ENCODE measurements at regions of chr9 and their contacts with region 1.

Region 1: GRCh38 chr9:123978981-123979380 is 32.6 kb upstream of the LHX2 start:
- DNase-seq: no peak
- H3K4me3 ChIP-seq: no peak overlapping the region
- H3K4me3 Mint-ChIP-seq: peak overlapping the region in 1 of 2 donors; percentile 40
- H3K27ac ChIP-seq: no peak overlapping the region
- H3K27ac Mint-ChIP-seq: peak overlapping the region in 1 of 7 donors; percentile 47
- H3K4me1 ChIP-seq: no peaks in the 10 kb centered on the region
- H3K4me1 Mint-ChIP-seq: no peaks in the 10 kb centered on the region
- H3K27me3 ChIP-seq: peaks cover 9 to 22% of the 10 kb centered on the region in 2 donors
- H3K27me3 Mint-ChIP-seq: peaks cover 22 to 40% (median 38%) of the 10 kb centered on the region in 3 donors
- CTCF ChIP-seq: no peak

Region 2: DNA sequence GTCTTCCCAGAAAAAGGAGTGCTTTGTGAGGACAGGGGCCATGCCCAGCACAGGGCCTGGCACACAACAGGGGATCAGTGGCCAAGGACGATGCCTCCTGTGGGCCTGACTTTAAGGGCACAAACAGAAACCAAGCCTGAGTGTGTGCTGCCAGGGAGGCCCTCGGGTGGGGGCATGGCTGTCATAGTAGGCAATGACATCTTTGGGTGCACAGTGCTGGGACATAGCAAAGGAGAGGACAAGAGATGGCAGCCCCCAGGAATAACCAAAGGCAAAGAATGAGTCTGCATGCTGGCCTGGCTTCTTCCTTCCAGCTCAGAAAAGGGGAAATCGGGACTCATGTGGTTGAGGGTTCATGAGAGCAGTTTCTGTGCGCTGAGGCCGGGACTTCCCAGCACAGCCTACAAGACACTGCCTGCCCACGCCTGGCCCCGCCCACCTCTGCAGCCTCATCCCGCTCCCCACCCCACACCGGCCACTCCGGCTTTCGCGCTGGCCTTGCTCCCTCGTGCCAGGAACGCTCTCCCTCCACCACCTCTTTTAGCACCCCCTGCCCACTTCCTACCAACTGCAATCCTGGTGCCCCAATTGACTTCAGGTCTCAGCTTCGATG is 18.8 kb after region 1 on chr9:
- intact Hi-C with region 1: loop called in 1 of 2 experiments (anchors 2 kb)
- DNase-seq: peak; percentile 72 to 97 (median 73)
- H3K4me3 ChIP-seq: peak overlapping the region in 1 of 3 experiments; percentile 58
- H3K4me3 Mint-ChIP-seq: peak overlapping the region; percentile 53 to 98
- H3K27ac ChIP-seq: peak overlapping the region; percentile 37 to 43
- H3K27ac Mint-ChIP-seq: peak overlapping the region in 4 of 7 donors; percentile 62 to 84 (median 70)
- H3K4me1 ChIP-seq: peaks cover 32 to 37% of the 10 kb centered on the region in 2 donors
- H3K4me1 Mint-ChIP-seq: peaks cover 49% of the 10 kb centered on the region
- H3K27me3 ChIP-seq: peaks cover 60 to 65% of the 10 kb centered on the region in 2 donors
- H3K27me3 Mint-ChIP-seq: peaks cover 80 to 85% (median 83%) of the 10 kb centered on the region in 3 donors
- CTCF ChIP-seq: no peak

Measured in CD14-positive monocyte (primary cell).